ENCODE measurements at regions of chr20 and their contacts with region 1.

Region 1: GRCh38 chr20:17749975-17750721 is 50.4 kb downstream of the BANF2 start:
- DNase-seq: no peak
- ATAC-seq: peak; percentile 78

Region 2: GRCh38 chr20:17838921-17839320 is 88.8 kb after region 1 on chr20:
- intact Hi-C with region 1: loop called (anchors 2 kb)
- DNase-seq: no peak
- ATAC-seq: no peak

Region 3: GRCh38 chr20:18331694-18332093 is 581.5 kb after region 1 on chr20:
- intact Hi-C with region 1: no loop called
- DNase-seq: no peak
- ATAC-seq: no peak

Region 4: DNA sequence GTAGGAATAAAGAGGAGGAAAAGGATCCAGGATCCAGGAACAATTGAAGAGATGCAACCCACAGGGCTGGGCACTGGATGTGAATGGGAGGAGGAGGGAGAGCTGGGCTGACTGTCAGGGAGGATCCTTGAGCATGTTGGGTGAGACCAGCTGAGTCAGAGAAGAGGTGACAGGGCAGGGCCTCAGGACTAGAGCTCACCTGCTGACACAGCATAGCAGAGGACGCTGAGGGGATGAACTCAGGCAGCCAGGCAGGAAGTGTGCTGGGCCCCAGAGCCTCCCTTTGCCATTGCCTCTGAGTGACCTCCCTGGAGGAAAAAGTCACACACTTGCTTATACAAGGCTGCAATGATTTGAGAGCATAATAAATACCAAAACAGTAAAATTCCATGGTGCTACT is 610.5 kb after region 1 on chr20:
- intact Hi-C with region 1: no loop called
- DNase-seq: no peak
- ATAC-seq: no peak